ENCODE measurements at regions of chr1 and their contacts with region 1.

Region 1: DNA sequence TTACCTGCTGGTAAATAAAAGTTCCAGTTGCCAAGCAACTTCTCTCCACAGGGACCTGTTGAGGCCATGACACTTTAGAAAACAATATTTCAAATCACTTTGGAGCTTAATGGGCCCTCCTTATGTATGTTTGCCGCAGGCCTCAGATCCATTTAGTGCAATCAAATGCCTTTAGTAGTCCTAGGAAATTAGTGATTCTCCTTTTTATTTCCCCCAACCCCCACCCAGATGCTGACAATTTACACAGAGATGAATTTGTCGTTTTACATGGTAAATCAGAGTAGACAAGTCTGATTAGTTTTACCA is 83.6 kb downstream of the CLIC4 start:
- DNase-seq: no peak
- ATAC-seq: no peak

Region 2: DNA sequence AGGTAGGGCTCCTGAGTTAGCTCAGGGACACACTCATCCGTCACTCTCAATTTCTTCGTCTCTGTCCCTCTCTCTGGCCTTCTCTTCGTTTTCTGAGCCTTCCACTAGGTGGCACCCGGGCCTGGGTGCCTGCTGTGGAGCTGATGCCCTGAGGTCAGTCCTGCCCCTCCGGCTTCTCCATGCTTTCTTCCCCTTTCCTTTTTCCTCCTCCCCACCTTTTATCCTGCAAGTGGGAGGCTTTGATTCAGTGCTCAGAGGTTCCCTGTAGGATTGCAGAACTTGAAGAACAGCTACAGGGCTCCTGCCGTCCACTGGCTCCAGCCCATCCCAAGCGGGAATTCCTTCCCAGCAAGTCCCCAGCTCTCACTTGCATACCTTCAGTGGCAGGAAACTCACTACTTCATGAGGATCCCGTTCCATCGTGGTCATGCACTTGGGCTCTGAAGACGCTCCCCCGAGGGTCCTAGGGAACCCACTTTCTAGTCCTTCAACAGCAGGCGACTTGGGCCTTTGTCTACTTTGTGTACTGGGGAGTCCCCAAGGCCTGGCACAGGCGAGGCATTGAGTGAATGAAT is 140.1 kb before region 1 on chr1:
- intact Hi-C with region 1: loop called (anchors 5 kb)
- DNase-seq: peak; percentile 80
- ATAC-seq: peak; percentile 87